ENCODE measurements at regions of chr12 and their contacts with region 1.

Region 1: GRCh38 chr12:53321074-53321814 is at the start of gene AAAS:
- DNase-seq: peak; percentile 90
- ATAC-seq: peak; percentile 92
- H3K4me3 ChIP-seq: peak within 1 kb of the TSS; percentile 52 to 74
- H3K27ac ChIP-seq: peak within 1 kb of the TSS; percentile 92
- H3K4me1 ChIP-seq: peaks cover 20% of the 10 kb centered on the region
- H3K27me3 ChIP-seq: no peaks in the 10 kb centered on the region
- CTCF ChIP-seq: peak; percentile 99
- total RNA-seq, gene AAAS: 77.7 TPM

Region 2: DNA sequence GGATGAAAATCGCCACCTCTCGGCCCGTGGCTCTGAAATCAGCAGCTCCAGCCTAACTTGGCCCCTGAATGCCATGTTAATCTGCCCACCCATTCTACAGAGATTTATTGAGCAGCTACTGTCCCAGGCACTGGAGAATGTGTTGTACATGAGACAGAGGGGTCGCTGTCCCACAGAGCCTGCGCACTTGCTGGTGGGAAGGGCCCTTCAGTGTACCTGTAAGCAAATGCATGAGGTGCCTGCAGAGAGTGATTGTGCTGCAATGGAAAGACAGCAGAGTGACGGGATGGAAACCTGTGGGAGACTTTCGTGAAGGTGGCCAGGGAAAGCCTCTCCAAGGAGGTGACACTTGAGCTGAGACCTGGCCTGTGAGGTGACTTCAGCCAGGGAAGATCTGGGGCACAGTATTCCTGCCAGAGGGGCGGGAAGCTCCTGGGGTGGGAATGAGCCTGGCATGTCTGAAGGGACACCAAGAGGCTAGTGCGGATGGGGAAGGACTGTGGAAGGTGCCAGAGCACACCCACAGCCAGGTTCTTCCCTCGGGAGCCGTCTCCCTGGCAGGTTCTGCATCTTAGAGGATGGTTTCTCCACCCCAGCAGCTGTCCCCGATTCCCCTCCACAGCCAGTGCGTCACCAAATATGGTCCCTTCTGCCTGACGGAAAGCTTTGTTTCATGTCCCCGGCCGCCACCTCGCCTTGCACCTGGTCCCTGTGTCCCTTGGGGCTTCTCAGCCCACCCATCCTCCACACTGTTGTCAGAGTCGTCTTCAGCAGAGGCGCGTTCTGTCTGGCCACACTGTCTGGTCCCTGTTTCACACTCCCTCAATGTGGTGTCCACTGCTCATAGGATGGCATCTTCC is 1233.1 kb before region 1 on chr12:
- CTCF ChIA-PET with region 1: no interaction called
- POLR2A ChIA-PET with region 1: no interaction called
- in situ Hi-C with region 1: no loop called
- intact Hi-C with region 1: no loop called
- DNase-seq: no peak
- ATAC-seq: 0 out of 2 replicates have a peak, but pooled peaks have one; percentile 20
- H3K4me3 ChIP-seq: no peak overlapping the region
- H3K27ac ChIP-seq: no peak overlapping the region
- H3K4me1 ChIP-seq: no peaks in the 10 kb centered on the region
- H3K27me3 ChIP-seq: peaks cover 14% of the 10 kb centered on the region
- CTCF ChIP-seq: no peak

Region 3: DNA sequence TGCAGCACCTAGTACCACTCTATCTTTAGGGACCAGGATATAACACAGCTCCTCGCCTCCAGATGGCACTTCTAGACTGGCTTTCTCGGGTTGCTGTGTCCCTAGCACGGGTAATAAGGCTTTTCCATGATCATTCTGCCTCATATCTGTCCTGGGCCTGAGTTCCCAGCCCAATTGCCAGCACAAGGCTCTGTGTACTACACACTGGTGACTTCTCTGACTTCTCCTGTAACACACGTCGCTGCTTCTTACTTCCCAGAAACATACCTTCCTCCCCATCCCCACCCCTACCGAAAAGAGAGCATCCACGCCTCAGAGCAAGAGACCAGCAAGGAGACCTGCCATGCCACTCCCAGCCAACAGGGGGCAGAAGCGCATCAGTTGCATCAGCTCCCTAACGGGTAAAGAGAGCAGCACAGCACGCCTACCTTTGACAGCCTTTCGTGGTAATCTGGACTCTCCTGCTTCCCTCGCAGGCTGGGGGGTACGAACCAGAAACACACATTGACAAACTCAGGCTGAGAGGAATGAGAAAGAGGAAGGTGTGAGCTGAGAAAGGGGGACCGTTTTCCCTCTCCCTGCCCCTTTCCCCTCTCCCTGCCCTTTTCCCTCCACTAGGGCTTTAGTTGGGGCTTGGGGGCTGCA is 161.9 kb before region 1 on chr12:
- CTCF ChIA-PET with region 1: interaction called, 10 read pairs
- POLR2A ChIA-PET with region 1: no interaction called
- in situ Hi-C with region 1: no loop called
- intact Hi-C with region 1: no loop called
- DNase-seq: peak; percentile 89
- ATAC-seq: peak; percentile 95
- H3K4me3 ChIP-seq: peak overlapping the region in 1 of 2 experiments; percentile 7; a peak in 1 of 4 replicates
- H3K27ac ChIP-seq: peak overlapping the region; percentile 69; the same call in 1 of the 2 replicates
- H3K4me1 ChIP-seq: no peaks in the 10 kb centered on the region
- H3K27me3 ChIP-seq: no peaks in the 10 kb centered on the region
- CTCF ChIP-seq: peak; percentile 99

Region 4: GRCh38 chr12:53334822-53335221 is 13.6 kb after region 1 on chr12:
- CTCF ChIA-PET with region 1: interaction called, 7 read pairs
- POLR2A ChIA-PET with region 1: interaction called, 12 read pairs
- in situ Hi-C with region 1: no loop called
- intact Hi-C with region 1: no loop called
- DNase-seq: no peak
- ATAC-seq: no peak
- H3K4me3 ChIP-seq: no peak overlapping the region
- H3K27ac ChIP-seq: no peak overlapping the region
- H3K4me1 ChIP-seq: no peaks in the 10 kb centered on the region
- H3K27me3 ChIP-seq: no peaks in the 10 kb centered on the region
- CTCF ChIP-seq: no peak

Region 5: GRCh38 chr12:53352331-53353256 is 31.4 kb after region 1 on chr12:
- CTCF ChIA-PET with region 1: interaction called, 13 read pairs
- POLR2A ChIA-PET with region 1: no interaction called
- in situ Hi-C with region 1: no loop called
- intact Hi-C with region 1: no loop called
- DNase-seq: peak; percentile 84
- ATAC-seq: peak; percentile 99
- H3K4me3 ChIP-seq: no peak overlapping the region
- H3K27ac ChIP-seq: peak overlapping the region; percentile 75
- H3K4me1 ChIP-seq: peaks cover 7% of the 10 kb centered on the region
- H3K27me3 ChIP-seq: no peaks in the 10 kb centered on the region
- CTCF ChIP-seq: peak; percentile 89

Region 6: DNA sequence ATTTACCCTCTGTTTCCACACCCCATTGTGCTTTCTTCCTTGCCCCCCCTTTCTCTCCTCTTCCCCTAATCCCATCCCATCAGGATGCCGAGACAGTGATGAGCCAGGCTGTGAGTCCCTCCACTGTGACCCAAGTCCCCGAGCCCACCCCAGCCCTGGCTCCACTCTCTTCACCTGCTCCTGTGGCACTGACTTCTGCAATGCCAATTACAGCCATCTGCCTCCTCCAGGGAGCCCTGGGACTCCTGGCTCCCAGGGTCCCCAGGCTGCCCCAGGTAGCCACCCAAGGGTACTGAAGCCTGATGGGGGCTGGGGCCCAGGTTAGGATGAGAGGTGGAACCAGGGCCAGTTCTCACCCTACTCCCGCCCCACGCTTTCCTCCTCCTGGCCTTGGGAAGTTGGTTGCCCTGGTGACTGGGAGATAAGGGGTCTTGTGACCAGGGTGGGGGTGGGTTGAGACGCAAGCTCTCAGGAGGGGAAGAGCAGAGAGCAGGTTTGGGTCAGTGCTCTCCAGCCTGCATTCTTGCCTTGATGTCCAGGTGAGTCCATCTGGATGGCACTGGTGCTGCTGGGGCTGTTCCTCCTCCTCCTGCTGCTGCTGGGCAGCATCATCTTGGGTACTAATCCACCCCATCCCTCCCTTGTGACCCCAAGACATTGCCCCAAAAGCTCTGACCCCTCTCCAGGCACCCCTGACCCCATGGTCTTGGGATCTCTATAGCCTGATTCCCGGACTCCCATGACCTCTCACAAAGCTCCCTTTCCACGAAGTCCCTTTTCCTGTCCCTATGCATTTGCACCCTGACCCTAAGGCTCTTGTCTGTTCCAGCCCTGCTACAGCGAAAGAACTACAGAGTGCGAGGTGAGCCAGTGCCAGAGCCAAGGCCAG is 103.6 kb after region 1 on chr12:
- CTCF ChIA-PET with region 1: interaction called, 30 read pairs
- POLR2A ChIA-PET with region 1: interaction called, 3 read pairs
- in situ Hi-C with region 1: no loop called
- intact Hi-C with region 1: loop called (anchors 2 kb)
- DNase-seq: no peak
- ATAC-seq: no peak
- H3K4me3 ChIP-seq: no peak overlapping the region
- H3K27ac ChIP-seq: no peak overlapping the region
- H3K4me1 ChIP-seq: peaks cover 14% of the 10 kb centered on the region
- H3K27me3 ChIP-seq: no peaks in the 10 kb centered on the region
- CTCF ChIP-seq: no peak

Region 7: GRCh38 chr12:53825246-53826081 is 504.2 kb after region 1 on chr12:
- CTCF ChIA-PET with region 1: no interaction called
- POLR2A ChIA-PET with region 1: interaction called, 12 read pairs
- in situ Hi-C with region 1: no loop called
- intact Hi-C with region 1: no loop called
- DNase-seq: peak; percentile 95
- ATAC-seq: peak; percentile 96
- H3K4me3 ChIP-seq: no peak overlapping the region
- H3K27ac ChIP-seq: peak overlapping the region; percentile 99
- H3K4me1 ChIP-seq: peaks cover 87% of the 10 kb centered on the region
- H3K27me3 ChIP-seq: no peaks in the 10 kb centered on the region
- CTCF ChIP-seq: no peak